A549 (cell line): ENCODE measurements at regions of chrX and their contacts with region 1.

Region 1: GRCh38 chrX:135944486-135944885 is 29.3 kb downstream of the MMGT1 start:
- DNase-seq: no peak
- ATAC-seq: no peak
- H3K4me3 ChIP-seq: no peak overlapping the region
- H3K27ac ChIP-seq: no peak overlapping the region
- H3K4me1 ChIP-seq: no peaks in the 10 kb centered on the region
- CTCF ChIP-seq: no peak
- EP300 ChIP-seq: no peak
- POLR2A ChIP-seq: no peak
- RAD21 ChIP-seq: no peak

Region 2: DNA sequence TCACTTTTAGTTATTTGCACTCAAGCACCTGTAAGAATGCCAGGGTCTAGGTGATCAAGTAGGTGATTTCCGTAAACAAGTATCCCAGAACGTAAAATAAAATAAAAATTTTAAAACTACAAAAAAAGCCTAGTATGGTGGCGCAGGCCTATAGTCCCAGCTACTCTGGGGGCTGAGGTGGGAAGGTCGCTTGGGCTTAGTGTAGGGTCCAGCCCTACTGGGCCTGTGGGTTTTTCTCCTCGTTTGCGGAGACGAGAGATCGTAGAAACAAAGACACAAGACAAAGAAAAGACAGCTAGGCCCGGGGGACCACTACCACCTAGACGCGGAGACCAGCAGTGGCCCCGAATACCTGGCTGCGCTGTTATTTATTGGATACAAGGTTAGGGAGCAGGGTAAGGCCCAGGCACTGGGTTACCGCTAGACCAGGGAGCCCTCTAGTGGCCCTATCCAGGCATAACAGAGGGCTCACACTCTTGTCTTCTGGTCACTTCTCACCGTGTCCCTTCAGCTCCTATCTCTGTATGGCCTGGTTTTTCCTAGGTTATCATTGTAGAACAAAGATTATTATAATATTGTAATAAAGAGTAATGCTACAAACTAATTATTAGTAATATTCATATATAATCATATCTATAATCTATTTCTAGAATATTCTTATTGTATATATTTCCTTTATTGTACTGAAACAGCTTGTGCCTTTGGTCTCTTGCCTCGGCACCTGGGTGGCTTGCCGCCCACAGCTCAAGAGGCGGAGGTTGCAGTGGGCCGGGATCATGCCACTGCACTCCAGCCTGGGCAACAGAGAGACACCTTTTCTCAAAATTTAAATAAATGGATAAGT is 12.6 kb before region 1 on chrX:
- CTCF ChIA-PET with region 1: interaction called, 20 read pairs
- POLR2A ChIA-PET with region 1: no interaction called
- DNase-seq: peak in 1 of 2 experiments; percentile 42
- ATAC-seq: peak; percentile 74 to 95; a peak in 4 of 6 replicates
- H3K4me3 ChIP-seq: no peak overlapping the region
- H3K27ac ChIP-seq: no peak overlapping the region
- H3K4me1 ChIP-seq: no peaks in the 10 kb centered on the region
- CTCF ChIP-seq: peak; percentile 46
- EP300 ChIP-seq: no peak
- POLR2A ChIP-seq: no peak
- RAD21 ChIP-seq: peak; percentile 58 to 59